ENCODE measurements at regions of chr9 and their contacts with region 1.

Region 1: DNA sequence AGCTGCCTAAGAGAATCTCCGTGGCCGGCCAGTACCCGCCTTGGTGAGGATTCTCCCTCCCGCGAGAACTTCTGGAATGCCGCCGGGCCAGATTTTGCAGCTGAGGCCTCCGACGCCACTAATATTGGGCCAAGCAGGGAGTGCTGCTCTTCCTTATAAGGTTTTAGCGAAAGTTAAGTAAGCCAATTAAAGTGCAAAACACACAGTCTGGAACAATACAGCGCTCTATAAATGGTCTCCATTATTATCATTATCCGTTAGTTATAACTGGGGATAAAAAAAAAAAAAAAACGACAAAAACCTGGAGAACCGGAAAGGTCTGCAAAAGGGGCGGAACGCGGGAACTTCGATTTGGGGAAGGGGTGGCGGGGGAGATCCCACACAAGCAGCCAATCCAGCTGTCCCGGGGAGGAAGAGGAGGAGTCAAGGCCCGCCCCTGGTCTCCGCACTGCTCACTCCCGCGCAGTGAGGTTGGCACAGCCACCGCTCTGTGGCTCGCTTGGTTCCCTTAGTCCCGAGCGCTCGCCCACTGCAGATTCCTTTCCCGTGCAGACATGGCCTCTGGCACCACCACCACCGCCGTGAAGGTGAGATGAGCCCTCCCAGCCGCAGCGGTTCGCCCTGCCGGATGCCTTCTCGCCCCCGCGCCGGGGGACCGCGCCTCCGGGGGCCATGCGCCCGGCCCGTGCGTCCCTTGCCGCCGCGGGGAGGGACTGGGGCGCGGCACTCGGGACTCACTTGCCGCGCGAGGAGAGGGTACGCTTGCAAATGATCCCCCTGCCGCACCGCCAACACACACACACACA is at the start of gene MTAP:
- ATAC-seq: peak; percentile 83 to 97 (median 93)
- H3K4me3 ChIP-seq: peak within 1 kb of the TSS; percentile 66 to 85 (median 72)
- H3K27ac ChIP-seq: peak within 1 kb of the TSS; percentile 16 to 71
- H3K4me1 ChIP-seq: peaks cover 10 to 12% of the 10 kb centered on the region in 2 donors
- total RNA-seq, gene MTAP: 11.2 to 47.5 (median 18.8) TPM

Region 2: DNA sequence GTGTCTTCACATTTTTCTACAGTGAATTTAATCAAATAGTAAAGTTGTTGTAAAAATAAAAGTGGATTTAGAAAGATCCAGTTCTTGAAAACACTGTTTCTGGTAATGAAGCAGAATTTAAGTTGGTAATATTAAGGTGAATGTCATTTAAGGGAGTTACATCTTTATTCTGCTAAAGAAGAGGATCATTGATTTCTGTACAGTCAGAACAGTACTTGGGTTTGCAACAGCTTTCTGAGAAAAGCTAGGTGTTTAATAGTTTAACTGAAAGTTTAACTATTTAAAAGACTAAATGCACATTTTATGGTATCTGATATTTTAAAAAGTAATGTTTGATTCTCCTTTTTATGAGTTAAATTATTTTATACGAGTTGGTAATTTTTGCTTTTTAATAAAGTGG is 60.5 kb after region 1 on chr9:
- in situ Hi-C with region 1: no loop called
- ATAC-seq: no peak
- H3K4me3 ChIP-seq: no peak overlapping the region
- H3K27ac ChIP-seq: no peak overlapping the region
- H3K4me1 ChIP-seq: no peaks in the 10 kb centered on the region

Region 3: GRCh38 chr9:21995177-21996086 is 193.0 kb after region 1 on chr9:
- in situ Hi-C with region 1: loop called in 3 of 9 experiments (anchors 25 kb)
- ATAC-seq: peak; percentile 59 to 82 (median 70)
- H3K4me3 ChIP-seq: peak overlapping the region; percentile 40 to 72 (median 61)
- H3K27ac ChIP-seq: peak overlapping the region in 1 of 2 donors; percentile 18
- H3K4me1 ChIP-seq: peaks cover 0 to 8% of the 10 kb centered on the region in 2 donors

Region 4: GRCh38 chr9:22008736-22009562 is 206.6 kb after region 1 on chr9 and contains the start of gene CDKN2B:
- in situ Hi-C with region 1: loop called in 1 of 9 experiments (anchors 25 kb)
- ATAC-seq: peak; percentile 92 to 96 (median 94)
- H3K4me3 ChIP-seq: peak within 1 kb of the TSS; percentile 44 to 62 (median 52)
- H3K27ac ChIP-seq: peak within 1 kb of the TSS in 1 of 2 donors; percentile 1
- H3K4me1 ChIP-seq: peaks cover 2 to 14% of the 10 kb centered on the region in 2 donors
- total RNA-seq, gene CDKN2B: 3.0 to 45.3 (median 7.5) TPM

Measured in motor neuron (in vitro differentiated cells).